Activated T-helper 1 cell treated with anti-CD3 and anti-CD28 coated beads, Interleukin-12 subunit alpha, Interleukin-12 subunit beta, Interleukin-2, Interleukin-4 antibody, amounts not matched to agents 30 ng/mL and 10 ng/mL and 1 ng/mL, durations not matched to agents 14 hours and 24 hours and 36 hours (primary cell): ENCODE measurements at regions of chr2 and their contacts with region 1.

Region 1: DNA sequence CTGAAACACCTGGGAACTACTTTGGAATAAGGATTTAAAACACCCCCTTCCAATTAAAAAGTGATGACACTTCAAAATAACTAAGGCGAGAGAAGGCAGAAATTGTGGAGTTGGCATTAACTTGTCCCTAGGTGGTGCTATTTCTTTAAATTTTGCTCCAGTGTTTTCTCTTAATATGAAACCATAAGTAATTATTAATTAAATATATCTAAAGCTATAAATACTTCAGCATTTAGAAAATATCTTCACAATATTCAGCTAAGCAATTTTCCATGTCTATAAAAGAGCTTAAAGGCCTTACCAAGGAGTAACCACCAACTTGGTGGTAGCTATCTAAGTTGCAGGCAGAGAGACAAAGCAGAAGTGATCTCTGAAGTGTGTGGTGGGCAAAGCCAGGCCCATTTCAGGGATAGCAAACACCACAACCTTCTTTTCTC is 186.8 kb upstream of the PGAP1 start:
- DNase-seq: no peak
- H3K4me3 Mint-ChIP-seq: no peak overlapping the region
- H3K27ac Mint-ChIP-seq: no peak overlapping the region
- H3K4me1 Mint-ChIP-seq: peaks cover 18% of the 10 kb centered on the region
- H3K27me3 Mint-ChIP-seq: no peaks in the 10 kb centered on the region

Region 2: DNA sequence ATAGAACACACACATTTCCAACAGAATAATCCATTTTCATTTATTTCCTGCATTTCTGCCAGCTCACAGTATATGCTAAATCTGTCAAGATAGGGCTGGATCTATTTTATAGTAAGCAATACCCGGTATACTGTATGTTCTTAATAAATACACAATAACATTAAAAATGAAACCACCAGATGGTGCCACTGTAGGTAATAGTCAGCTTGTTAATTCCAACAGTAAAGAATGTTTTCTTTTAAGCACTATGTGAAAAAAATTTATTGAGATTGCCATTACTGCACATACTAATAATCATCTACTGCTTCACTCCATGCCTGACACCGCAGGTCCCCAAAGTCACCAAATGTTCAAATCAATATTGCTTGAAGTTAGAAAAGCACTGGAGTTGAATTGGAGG is 55.3 kb before region 1 on chr2:
- intact Hi-C with region 1: no loop called
- DNase-seq: no peak
- H3K4me3 Mint-ChIP-seq: no peak overlapping the region
- H3K27ac Mint-ChIP-seq: no peak overlapping the region
- H3K4me1 Mint-ChIP-seq: peaks cover 21% of the 10 kb centered on the region
- H3K27me3 Mint-ChIP-seq: no peaks in the 10 kb centered on the region

Region 3: GRCh38 chr2:197168705-197169104 is 55.4 kb after region 1 on chr2:
- intact Hi-C with region 1: loop called (anchors 1 kb)
- DNase-seq: peak; percentile 35
- H3K4me3 Mint-ChIP-seq: no peak overlapping the region
- H3K27ac Mint-ChIP-seq: peak overlapping the region; percentile 13
- H3K4me1 Mint-ChIP-seq: peaks cover 44% of the 10 kb centered on the region
- H3K27me3 Mint-ChIP-seq: no peaks in the 10 kb centered on the region

Region 4: DNA sequence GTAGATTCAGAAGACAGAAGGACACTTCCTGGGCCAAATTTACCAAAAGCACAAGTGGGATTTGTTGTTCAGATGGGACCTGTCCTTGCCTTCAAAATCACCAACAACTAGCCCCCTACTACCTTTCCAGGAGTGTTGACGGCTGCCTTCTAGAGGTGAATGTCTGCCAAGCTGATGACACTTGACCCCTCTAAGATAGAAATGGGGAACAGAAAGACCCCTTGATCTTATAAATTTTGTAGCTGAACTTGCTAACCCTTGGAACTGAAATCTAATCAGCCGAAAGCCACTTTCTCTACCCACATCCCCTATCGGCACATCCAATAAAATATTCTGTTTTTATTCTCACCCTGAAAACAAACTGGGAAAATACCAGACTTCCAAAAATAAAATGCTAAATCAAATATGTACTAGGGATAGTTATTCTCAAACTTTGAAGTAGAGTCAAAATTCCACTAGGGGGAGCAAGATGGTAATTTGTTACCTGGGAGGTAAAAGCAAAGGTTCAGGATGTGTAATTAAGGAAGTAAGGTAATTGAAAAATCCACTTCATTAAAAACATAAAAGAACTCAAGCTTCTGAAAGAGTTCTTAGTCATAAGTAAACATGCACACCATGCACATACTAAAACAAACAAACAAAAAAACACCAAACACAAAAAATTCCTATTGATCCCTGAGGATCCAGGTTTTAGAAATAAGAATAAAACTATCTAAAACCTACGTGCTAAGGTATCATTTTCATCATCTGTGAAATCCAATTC is 78.1 kb after region 1 on chr2:
- intact Hi-C with region 1: loop called (anchors 1 kb)
- DNase-seq: no peak
- H3K4me3 Mint-ChIP-seq: peak overlapping the region; percentile 0
- H3K27ac Mint-ChIP-seq: peak overlapping the region; percentile 47
- H3K4me1 Mint-ChIP-seq: peaks cover 83% of the 10 kb centered on the region
- H3K27me3 Mint-ChIP-seq: no peaks in the 10 kb centered on the region